H1 (cell line): ENCODE measurements at regions of chr7 and their contacts with region 1.

Region 1: DNA sequence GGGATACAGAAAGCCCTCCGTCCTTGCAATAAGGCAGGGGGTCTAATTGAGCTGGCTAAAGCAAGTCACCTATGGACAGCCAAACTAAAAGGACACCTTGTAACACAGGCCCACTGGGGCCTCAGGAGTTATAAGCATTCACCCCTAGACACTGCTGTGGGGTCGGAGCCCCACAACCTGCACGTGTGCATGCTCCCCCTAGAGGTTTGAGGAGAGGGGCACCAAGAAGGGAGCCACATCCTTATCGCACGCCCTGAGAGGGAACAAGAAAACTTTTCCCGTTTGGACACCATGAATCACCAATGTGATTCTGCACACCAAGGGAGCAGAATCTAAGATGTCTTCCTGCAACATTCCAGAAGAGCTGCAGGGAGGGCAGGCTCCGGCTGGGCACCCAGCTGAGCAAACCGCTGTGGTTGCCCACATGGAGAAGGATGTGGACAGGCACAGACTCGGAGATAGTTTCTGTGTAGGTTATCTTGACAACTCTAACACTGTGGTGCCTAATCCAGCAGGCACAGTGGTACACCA is 17.7 kb upstream of the TARP start:
- DNase-seq: no peak
- H3K4me3 ChIP-seq: no peak overlapping the region
- H3K27ac ChIP-seq: no peak overlapping the region
- H3K4me1 ChIP-seq: no peaks in the 10 kb centered on the region
- H3K27me3 ChIP-seq: no peaks in the 10 kb centered on the region
- CTCF ChIP-seq: peak; percentile 43 to 63 (median 60)
- EP300 ChIP-seq: no peak
- POLR2A ChIP-seq: no peak
- RAD21 ChIP-seq: peak; percentile 18 to 33; a peak in 2 of 4 replicates

Region 2: GRCh38 chr7:38306171-38306570 is 15.0 kb after region 1 on chr7:
- CTCF ChIA-PET with region 1: interaction called, 13 read pairs
- POLR2A ChIA-PET with region 1: no interaction called
- DNase-seq: no peak
- H3K4me3 ChIP-seq: no peak overlapping the region
- H3K27ac ChIP-seq: no peak overlapping the region
- H3K4me1 ChIP-seq: peaks cover 0 to 5% (median 0%) of the 10 kb centered on the region in 4 experiments; a peak in 1 of 7 replicates
- H3K27me3 ChIP-seq: no peaks in the 10 kb centered on the region
- CTCF ChIP-seq: no peak
- EP300 ChIP-seq: no peak
- POLR2A ChIP-seq: no peak
- RAD21 ChIP-seq: no peak

Region 3: DNA sequence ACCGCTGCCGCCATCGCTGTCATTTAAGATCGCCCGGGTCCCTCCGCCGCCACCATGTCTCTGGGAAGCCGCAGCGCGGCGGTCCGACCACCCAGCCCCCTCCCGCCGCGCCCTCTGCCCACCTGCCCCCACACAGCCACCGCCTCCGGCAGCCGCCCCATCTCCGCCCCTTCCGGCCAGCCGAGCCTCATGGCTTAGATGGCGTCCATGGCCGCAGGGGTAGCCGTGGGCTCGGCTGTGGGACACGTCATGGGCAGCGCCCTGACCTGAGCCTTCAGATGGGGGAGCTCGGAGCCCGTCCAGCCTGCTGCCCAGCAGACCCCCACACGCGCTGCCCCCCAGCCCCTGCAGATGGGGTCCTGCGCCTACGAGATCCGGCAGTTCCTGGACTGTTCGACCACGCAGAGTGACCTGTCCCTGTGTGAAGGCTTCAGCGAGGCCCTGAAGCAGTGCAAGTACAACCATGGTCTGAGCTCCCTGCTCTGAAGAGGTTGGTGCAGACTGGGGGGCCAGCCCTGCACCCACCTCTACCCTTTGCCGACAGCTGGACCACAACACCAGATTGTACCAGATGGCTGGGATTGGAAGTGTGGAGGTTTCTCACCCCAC is 20.3 kb after region 1 on chr7:
- CTCF ChIA-PET with region 1: interaction called, 13 read pairs
- POLR2A ChIA-PET with region 1: no interaction called
- DNase-seq: no peak
- H3K4me3 ChIP-seq: no peak overlapping the region
- H3K27ac ChIP-seq: no peak overlapping the region
- H3K4me1 ChIP-seq: no peaks in the 10 kb centered on the region
- H3K27me3 ChIP-seq: no peaks in the 10 kb centered on the region
- CTCF ChIP-seq: no peak
- EP300 ChIP-seq: no peak
- POLR2A ChIP-seq: no peak
- RAD21 ChIP-seq: no peak